ENCODE measurements at regions of chr1 and their contacts with region 1.

Region 1: GRCh38 chr1:167599957-167600581 is 30.0 kb upstream of the RCSD1 start:
- DNase-seq: peak; percentile 8 to 63 (median 55)
- H3K4me3 ChIP-seq: peak overlapping the region; percentile 2
- H3K4me3 Mint-ChIP-seq: peak overlapping the region in 6 of 7 donors; percentile 28 to 68 (median 47)
- H3K27ac ChIP-seq: no peak overlapping the region
- H3K27ac Mint-ChIP-seq: peak overlapping the region in 5 of 8 donors; percentile 33 to 80 (median 61)
- H3K4me1 ChIP-seq: peaks cover 33% of the 10 kb centered on the region
- H3K4me1 Mint-ChIP-seq: peaks cover 37 to 47% (median 45%) of the 10 kb centered on the region in 3 donors
- H3K27me3 ChIP-seq: no peaks in the 10 kb centered on the region
- H3K27me3 Mint-ChIP-seq: no peaks in the 10 kb centered on the region

Region 2: GRCh38 chr1:167578939-167579521 is 21.0 kb before region 1 on chr1:
- CTCF ChIA-PET with region 1: no interaction called
- POLR2A ChIA-PET with region 1: no interaction called
- DNase-seq: no peak
- H3K4me3 ChIP-seq: no peak overlapping the region
- H3K4me3 Mint-ChIP-seq: no peak overlapping the region
- H3K27ac ChIP-seq: no peak overlapping the region
- H3K27ac Mint-ChIP-seq: no peak overlapping the region
- H3K4me1 ChIP-seq: no peaks in the 10 kb centered on the region
- H3K4me1 Mint-ChIP-seq: no peaks in the 10 kb centered on the region
- H3K27me3 ChIP-seq: no peaks in the 10 kb centered on the region
- H3K27me3 Mint-ChIP-seq: peaks cover 21 to 36% of the 10 kb centered on the region in 2 donors

Region 3: DNA sequence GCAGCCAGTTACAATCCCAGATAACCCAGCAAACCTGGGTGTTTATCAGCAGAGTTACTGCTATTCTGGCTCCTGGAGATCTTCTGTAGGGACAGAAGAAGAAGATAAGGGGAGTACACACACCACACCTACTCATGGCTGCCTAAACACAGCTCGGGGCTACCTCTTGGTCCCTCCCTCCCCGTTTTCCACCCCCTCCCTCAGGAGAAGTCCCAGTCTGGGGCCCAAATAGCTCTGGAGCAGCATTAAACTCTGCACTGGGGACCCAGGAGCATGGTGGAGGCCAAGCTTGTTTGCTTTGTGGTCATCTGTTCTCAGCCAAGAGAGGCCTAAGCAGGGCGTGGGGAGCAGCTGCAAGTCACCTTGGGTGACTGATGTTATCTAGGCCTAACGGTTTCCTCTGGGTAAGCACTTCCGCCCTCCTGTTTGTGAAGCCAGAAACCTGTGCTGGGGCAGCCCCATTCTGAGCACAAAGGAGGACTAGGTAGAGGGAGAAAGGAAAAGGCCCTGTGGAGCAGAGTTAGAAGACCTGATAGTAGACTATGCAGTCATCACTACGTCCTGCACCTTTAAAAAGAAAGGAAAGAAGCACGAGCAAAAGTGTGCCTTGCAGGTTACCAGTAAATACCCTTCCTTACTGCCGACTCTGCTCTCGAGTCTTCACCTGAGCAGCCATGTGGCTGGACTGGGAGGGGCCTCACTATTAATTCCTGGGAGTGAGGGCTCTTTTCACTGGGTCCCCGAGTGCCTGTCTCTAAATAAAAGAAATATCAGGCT is 28.0 kb after region 1 on chr1:
- CTCF ChIA-PET with region 1: interaction called, 55 read pairs
- POLR2A ChIA-PET with region 1: interaction called, 18 read pairs
- DNase-seq: peak; percentile 60 to 85 (median 77)
- H3K4me3 ChIP-seq: peak overlapping the region; percentile 60
- H3K4me3 Mint-ChIP-seq: peak overlapping the region; percentile 94 to 98 (median 96)
- H3K27ac ChIP-seq: peak overlapping the region; percentile 86
- H3K27ac Mint-ChIP-seq: peak overlapping the region; percentile 94 to 100 (median 98)
- H3K4me1 ChIP-seq: peaks cover 53% of the 10 kb centered on the region
- H3K4me1 Mint-ChIP-seq: peaks cover 61 to 68% (median 65%) of the 10 kb centered on the region in 3 donors
- H3K27me3 ChIP-seq: no peaks in the 10 kb centered on the region
- H3K27me3 Mint-ChIP-seq: peaks cover 0 to 5% of the 10 kb centered on the region in 2 donors

Region 4: DNA sequence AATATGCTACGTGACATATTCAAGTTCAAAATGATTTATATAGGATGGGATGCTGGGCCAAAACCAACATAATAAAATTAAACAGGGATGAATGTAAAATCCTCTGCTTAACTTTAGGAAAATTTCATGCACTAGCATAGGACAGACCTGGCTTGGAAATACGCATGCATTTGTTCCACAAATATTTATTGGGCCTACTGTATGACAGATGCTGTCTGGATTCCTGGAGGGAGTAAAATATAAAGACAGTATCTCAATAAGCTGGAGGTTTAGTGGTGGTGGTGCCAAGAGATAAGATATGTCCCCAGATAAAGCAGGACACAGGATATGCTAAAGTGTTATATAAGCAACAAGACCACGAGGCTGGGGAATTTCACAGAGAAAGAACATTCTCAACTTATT is 45.1 kb after region 1 on chr1:
- CTCF ChIA-PET with region 1: interaction called, 132 read pairs
- POLR2A ChIA-PET with region 1: no interaction called
- DNase-seq: no peak
- H3K4me3 ChIP-seq: no peak overlapping the region
- H3K4me3 Mint-ChIP-seq: peak overlapping the region in 5 of 7 donors; percentile 33 to 64 (median 55)
- H3K27ac ChIP-seq: no peak overlapping the region
- H3K27ac Mint-ChIP-seq: peak overlapping the region; percentile 69 to 93 (median 84)
- H3K4me1 ChIP-seq: peaks cover 82% of the 10 kb centered on the region
- H3K4me1 Mint-ChIP-seq: peaks cover 91 to 95% (median 94%) of the 10 kb centered on the region in 3 donors
- H3K27me3 ChIP-seq: no peaks in the 10 kb centered on the region
- H3K27me3 Mint-ChIP-seq: peaks cover 0 to 1% of the 10 kb centered on the region in 2 donors

Region 5: DNA sequence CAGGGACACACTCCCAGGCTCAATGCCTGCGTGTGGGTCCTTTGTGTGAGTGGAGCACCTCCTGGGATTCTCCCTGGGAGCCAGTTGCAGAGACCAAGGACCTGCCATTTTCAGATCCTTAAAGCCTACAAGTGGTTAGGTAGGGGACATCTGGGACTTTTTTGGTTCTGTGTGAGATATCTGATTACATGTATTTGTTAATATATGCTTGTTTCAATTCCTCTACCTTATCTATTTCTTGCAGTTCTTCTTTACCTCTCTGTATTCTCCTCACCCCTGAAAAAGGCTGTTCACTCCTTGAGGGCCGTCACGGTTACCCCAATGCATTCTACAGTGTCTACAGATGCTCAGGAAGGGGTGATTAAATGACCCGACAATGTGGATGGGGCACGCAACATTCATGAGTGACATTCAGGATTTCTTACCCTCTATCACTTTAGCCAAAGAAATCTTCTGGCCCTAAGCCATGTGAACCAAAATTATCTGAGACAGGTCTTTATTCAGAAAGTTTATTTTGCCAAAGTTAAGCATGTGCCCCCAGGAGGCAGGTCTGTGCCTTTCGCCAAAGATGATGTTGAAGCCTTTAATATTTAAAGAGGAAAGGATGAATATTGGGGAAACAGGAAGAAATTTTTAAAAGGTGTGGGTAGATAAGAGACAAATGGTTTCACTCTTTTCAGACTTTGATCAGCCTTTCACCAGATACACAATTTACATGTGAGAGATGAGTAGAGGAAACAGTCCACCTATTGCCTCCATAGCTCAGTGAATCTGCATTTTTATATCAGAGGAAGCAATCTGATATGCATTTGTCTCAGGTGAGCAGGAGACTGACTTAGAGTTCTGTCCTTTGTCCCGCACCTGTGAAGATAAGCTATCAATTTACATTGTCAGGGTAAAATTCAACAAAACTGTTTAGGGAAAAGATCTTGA is 77.1 kb after region 1 on chr1:
- CTCF ChIA-PET with region 1: interaction called, 13 read pairs
- POLR2A ChIA-PET with region 1: no interaction called
- DNase-seq: no peak
- H3K4me3 ChIP-seq: no peak overlapping the region
- H3K4me3 Mint-ChIP-seq: peak overlapping the region in 1 of 7 donors; percentile 51
- H3K27ac ChIP-seq: no peak overlapping the region
- H3K27ac Mint-ChIP-seq: peak overlapping the region in 5 of 8 donors; percentile 40 to 66 (median 45)
- H3K4me1 ChIP-seq: peaks cover 56% of the 10 kb centered on the region
- H3K4me1 Mint-ChIP-seq: peaks cover 30 to 54% (median 30%) of the 10 kb centered on the region in 3 donors
- H3K27me3 ChIP-seq: no peaks in the 10 kb centered on the region
- H3K27me3 Mint-ChIP-seq: no peaks in the 10 kb centered on the region

Region 6: DNA sequence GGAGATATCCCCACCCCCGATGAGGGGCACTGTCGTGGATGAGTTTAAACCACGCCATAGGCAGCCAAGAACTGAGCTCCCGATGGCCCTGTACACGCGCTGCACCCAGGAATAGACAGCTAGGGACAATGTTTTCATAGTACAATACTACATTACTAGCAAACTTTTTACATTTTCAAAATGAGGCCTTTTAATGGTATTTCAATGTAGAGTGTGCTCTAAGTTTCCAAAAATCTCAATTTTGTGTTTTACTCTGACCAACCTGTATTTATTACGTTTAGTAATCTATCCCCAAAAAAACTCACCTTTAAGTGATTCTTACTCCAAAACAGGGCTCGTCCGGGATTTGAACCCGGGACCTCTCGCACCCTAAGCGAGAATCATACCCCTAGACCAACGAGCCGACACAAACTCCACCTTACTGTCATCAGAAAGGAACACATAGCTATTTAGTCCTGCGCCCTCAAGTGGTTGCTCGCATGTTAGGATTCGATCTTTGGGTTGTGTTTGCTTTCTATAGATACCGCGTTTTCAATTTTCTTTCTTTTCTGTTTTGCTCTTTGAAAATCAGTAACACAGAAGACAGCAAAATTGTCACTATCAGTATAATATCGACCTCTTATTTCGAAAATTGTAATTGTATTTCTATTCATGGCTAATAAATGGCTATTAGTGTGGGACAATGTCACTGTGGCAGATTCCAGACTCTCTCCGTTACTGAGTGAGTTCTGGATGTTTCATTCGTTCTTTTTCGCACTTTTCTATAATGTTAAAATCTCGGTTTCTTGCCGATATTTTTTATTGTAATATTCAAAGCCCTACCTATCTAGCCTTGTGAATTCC is 115.3 kb after region 1 on chr1:
- CTCF ChIA-PET with region 1: interaction called, 19 read pairs
- POLR2A ChIA-PET with region 1: no interaction called
- DNase-seq: peak; percentile 67 to 90 (median 84)
- H3K4me3 ChIP-seq: peak overlapping the region; percentile 93
- H3K4me3 Mint-ChIP-seq: peak overlapping the region; percentile 83 to 96 (median 89)
- H3K27ac ChIP-seq: peak overlapping the region; percentile 71
- H3K27ac Mint-ChIP-seq: peak overlapping the region; percentile 59 to 98 (median 92)
- H3K4me1 ChIP-seq: peaks cover 25% of the 10 kb centered on the region
- H3K4me1 Mint-ChIP-seq: peaks cover 20 to 49% (median 29%) of the 10 kb centered on the region in 3 donors
- H3K27me3 ChIP-seq: no peaks in the 10 kb centered on the region
- H3K27me3 Mint-ChIP-seq: peaks cover 0 to 14% of the 10 kb centered on the region in 2 donors

Region 7: GRCh38 chr1:167752219-167752985 is 152.3 kb after region 1 on chr1:
- CTCF ChIA-PET with region 1: no interaction called
- POLR2A ChIA-PET with region 1: no interaction called
- DNase-seq: no peak
- H3K4me3 ChIP-seq: no peak overlapping the region
- H3K4me3 Mint-ChIP-seq: no peak overlapping the region
- H3K27ac ChIP-seq: no peak overlapping the region
- H3K27ac Mint-ChIP-seq: peak overlapping the region in 1 of 8 donors; percentile 26
- H3K4me1 ChIP-seq: no peaks in the 10 kb centered on the region
- H3K4me1 Mint-ChIP-seq: peaks cover 0 to 2% (median 0%) of the 10 kb centered on the region in 3 donors
- H3K27me3 ChIP-seq: no peaks in the 10 kb centered on the region
- H3K27me3 Mint-ChIP-seq: peaks cover 0 to 3% of the 10 kb centered on the region in 2 donors

Measured in CD8-positive, alpha-beta memory T cell (primary cell).